ENCODE measurements at regions of chr12 and their contacts with region 1.

Region 1: GRCh38 chr12:104215638-104216297 is at the start of gene TXNRD1:
- DNase-seq: peak; percentile 90
- H3K4me3 Mint-ChIP-seq: peak within 1 kb of the TSS; percentile 74
- H3K27ac Mint-ChIP-seq: peak within 1 kb of the TSS; percentile 9
- H3K4me1 Mint-ChIP-seq: peaks cover 38% of the 10 kb centered on the region
- H3K27me3 Mint-ChIP-seq: peaks cover 1% of the 10 kb centered on the region
- total RNA-seq, gene TXNRD1: 82.7 to 82.8 TPM

Region 2: GRCh38 chr12:104049903-104050356 is 165.8 kb before region 1 on chr12 and contains the start of gene GLT8D2:
- CTCF ChIA-PET with region 1: no interaction called
- POLR2A ChIA-PET with region 1: no interaction called
- intact Hi-C with region 1: no loop called
- DNase-seq: no peak
- H3K4me3 Mint-ChIP-seq: peak within 1 kb of the TSS; percentile 21
- H3K27ac Mint-ChIP-seq: no peak within 1 kb of the TSS
- H3K4me1 Mint-ChIP-seq: peaks cover 5% of the 10 kb centered on the region
- H3K27me3 Mint-ChIP-seq: peaks cover 27% of the 10 kb centered on the region
- total RNA-seq, gene GLT8D2: not detected

Region 3: GRCh38 chr12:104258476-104259067 is 42.8 kb after region 1 on chr12:
- CTCF ChIA-PET with region 1: interaction called, 7 read pairs
- POLR2A ChIA-PET with region 1: no interaction called
- intact Hi-C with region 1: loop called (anchors 5 kb)
- DNase-seq: no peak
- H3K4me3 Mint-ChIP-seq: no peak overlapping the region
- H3K27ac Mint-ChIP-seq: no peak overlapping the region
- H3K4me1 Mint-ChIP-seq: no peaks in the 10 kb centered on the region
- H3K27me3 Mint-ChIP-seq: no peaks in the 10 kb centered on the region

Region 4: GRCh38 chr12:104303538-104304151 is 87.9 kb after region 1 on chr12 and contains the start of gene EID3:
- CTCF ChIA-PET with region 1: interaction called, 8 read pairs
- POLR2A ChIA-PET with region 1: interaction called, 3 read pairs
- intact Hi-C with region 1: loop called (anchors 1 kb)
- DNase-seq: peak; percentile 94
- H3K4me3 Mint-ChIP-seq: peak within 1 kb of the TSS; percentile 89
- H3K27ac Mint-ChIP-seq: peak within 1 kb of the TSS; percentile 93
- H3K4me1 Mint-ChIP-seq: peaks cover 60% of the 10 kb centered on the region
- H3K27me3 Mint-ChIP-seq: no peaks in the 10 kb centered on the region
- total RNA-seq, gene EID3: 4.7 TPM

Region 5: GRCh38 chr12:104358347-104359003 is 142.7 kb after region 1 on chr12:
- CTCF ChIA-PET with region 1: interaction called, 3 read pairs
- POLR2A ChIA-PET with region 1: no interaction called
- intact Hi-C with region 1: loop called (anchors 1 kb)
- DNase-seq: peak; percentile 79
- H3K4me3 Mint-ChIP-seq: no peak overlapping the region
- H3K27ac Mint-ChIP-seq: no peak overlapping the region
- H3K4me1 Mint-ChIP-seq: peaks cover 2% of the 10 kb centered on the region
- H3K27me3 Mint-ChIP-seq: no peaks in the 10 kb centered on the region

Region 6: GRCh38 chr12:104686196-104686595 is 470.4 kb after region 1 on chr12:
- CTCF ChIA-PET with region 1: no interaction called
- POLR2A ChIA-PET with region 1: no interaction called
- intact Hi-C with region 1: loop called (anchors 5 kb)
- DNase-seq: peak; percentile 62
- H3K4me3 Mint-ChIP-seq: no peak overlapping the region
- H3K27ac Mint-ChIP-seq: peak overlapping the region; percentile 92
- H3K4me1 Mint-ChIP-seq: peaks cover 85% of the 10 kb centered on the region
- H3K27me3 Mint-ChIP-seq: no peaks in the 10 kb centered on the region

Measured in activated CD4-positive, alpha-beta memory T cell treated with anti-CD3 and anti-CD28 coated beads for 36 hours (primary cell).